ENCODE measurements at regions of chr1 and their contacts with region 1.

Region 1: DNA sequence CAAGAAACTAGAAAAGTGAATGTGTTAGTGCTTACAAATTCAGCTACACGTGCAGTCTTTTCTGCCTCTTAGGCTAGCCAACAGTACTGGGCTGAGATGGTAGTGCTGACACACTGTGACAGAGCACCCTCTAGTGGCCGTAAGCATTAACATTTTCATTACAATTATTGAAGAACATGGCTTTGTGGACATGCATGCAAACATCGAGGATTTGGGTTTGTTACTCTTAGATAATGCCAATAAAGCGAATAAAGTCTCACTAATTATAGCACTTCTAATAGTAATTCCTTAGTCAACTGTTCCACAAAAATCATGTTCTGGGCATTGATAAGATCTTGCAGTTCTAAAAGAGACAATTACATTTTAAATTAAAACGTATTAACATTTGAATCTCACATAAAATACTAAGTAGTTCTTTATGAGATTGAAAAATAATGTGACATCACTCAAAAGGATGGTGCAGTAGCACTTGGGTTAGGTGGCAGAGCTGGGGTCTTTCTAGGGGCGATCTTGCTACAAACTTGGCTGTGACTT is 47.1 kb downstream of the MYSM1 start:
- DNase-seq: peak; percentile 72
- H3K4me3 ChIP-seq: no peak overlapping the region
- H3K27ac ChIP-seq: no peak overlapping the region
- H3K27me3 ChIP-seq: no peaks in the 10 kb centered on the region
- CTCF ChIP-seq: peak; percentile 77

Region 2: DNA sequence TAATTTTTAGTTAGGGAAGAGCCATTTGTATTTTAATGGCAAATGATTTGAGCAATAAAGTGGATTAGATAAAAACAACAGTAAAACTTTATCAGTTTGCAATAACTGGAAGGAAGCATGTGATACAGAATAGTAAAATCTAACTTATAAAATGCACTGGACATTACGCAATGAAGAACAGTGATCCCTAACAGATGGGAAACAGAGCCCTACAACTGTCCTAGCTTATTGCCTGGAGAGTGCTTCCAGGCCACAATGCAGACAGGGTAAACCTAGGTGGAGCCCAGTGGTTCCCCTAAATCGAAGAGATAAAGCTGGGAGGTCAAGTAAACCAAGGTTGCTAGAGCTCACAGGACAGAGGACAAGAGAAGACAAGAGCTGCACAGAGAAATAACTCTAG is 113.2 kb before region 1 on chr1:
- CTCF ChIA-PET with region 1: interaction called, 50 read pairs
- POLR2A ChIA-PET with region 1: no interaction called
- DNase-seq: no peak
- H3K4me3 ChIP-seq: no peak overlapping the region
- H3K27ac ChIP-seq: no peak overlapping the region
- H3K27me3 ChIP-seq: no peaks in the 10 kb centered on the region
- CTCF ChIP-seq: no peak

Region 3: GRCh38 chr1:58584082-58584895 is 68.4 kb before region 1 on chr1:
- CTCF ChIA-PET with region 1: interaction called, 15 read pairs
- POLR2A ChIA-PET with region 1: no interaction called
- DNase-seq: peak; percentile 87
- H3K4me3 ChIP-seq: no peak overlapping the region
- H3K27ac ChIP-seq: peak overlapping the region; percentile 80
- H3K27me3 ChIP-seq: no peaks in the 10 kb centered on the region
- CTCF ChIP-seq: no peak

Region 4: GRCh38 chr1:58670181-58670580 is 17.5 kb after region 1 on chr1:
- CTCF ChIA-PET with region 1: interaction called, 14 read pairs
- POLR2A ChIA-PET with region 1: no interaction called
- DNase-seq: no peak
- H3K4me3 ChIP-seq: no peak overlapping the region
- H3K27ac ChIP-seq: no peak overlapping the region
- H3K27me3 ChIP-seq: no peaks in the 10 kb centered on the region
- CTCF ChIP-seq: no peak

Region 5: DNA sequence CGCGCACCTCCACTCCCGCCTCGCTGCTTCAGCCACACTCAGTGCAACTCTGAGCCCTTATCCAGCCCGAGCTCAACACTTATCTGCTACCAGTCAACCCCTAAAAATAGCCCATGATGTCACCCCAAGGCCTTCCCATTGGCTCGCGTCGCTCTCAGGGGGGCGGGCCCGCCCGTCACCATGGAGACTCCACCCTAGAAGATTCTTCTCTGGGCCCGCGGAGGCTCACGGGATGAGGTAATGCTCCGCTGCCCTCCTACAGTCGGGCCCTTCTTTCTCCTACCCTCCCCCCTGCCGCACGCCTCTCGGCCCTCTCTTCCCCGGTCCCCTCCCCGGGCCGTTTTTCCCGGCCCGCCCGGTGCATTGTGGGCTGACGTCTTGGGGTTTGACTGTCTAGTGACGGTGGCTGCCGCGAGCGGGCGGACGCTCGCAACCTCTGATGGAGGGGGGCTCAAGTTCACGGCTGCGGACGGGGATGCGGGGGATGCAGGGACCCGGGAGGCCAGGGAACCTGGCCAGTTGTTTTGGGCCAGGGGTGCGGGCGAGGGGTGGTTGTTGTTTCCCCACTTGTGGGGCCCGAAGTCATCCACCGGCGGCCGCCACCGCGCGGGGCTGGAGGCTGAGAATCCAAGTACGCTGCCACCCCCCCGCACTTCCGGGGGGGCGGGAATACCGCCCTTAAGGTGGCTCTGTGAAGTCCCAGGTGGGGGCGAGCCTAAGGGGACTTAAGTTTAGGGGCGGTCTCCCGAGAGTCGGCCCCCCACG is 131.5 kb after region 1 on chr1 and contains the start of gene JUN:
- CTCF ChIA-PET with region 1: no interaction called
- POLR2A ChIA-PET with region 1: no interaction called
- DNase-seq: peak; percentile 99
- H3K4me3 ChIP-seq: peak within 1 kb of the TSS; percentile 93
- H3K27ac ChIP-seq: peak within 1 kb of the TSS; percentile 99
- H3K27me3 ChIP-seq: no peaks in the 10 kb centered on the region
- CTCF ChIP-seq: no peak
- polyA plus RNA-seq, gene JUN: 48.7 and 56.5 TPM in 2 replicates

Measured in AG04450 (cell line).